Activated CD8-positive, alpha-beta memory T cell treated with anti-CD3 and anti-CD28 coated beads, Interleukin-2, amount 10 ng/mL, durations not matched to agents 7 days and 5 days (primary cell): ENCODE measurements at regions of chr12 and their contacts with region 1.

Region 1: GRCh38 chr12:85029456-85029855 is 6.6 kb downstream of the TSPAN19 start:
- DNase-seq: no peak
- ATAC-seq: no peak
- H3K4me3 Mint-ChIP-seq: no peak overlapping the region
- H3K27ac Mint-ChIP-seq: no peak overlapping the region
- H3K4me1 Mint-ChIP-seq: no peaks in the 10 kb centered on the region
- H3K27me3 Mint-ChIP-seq: no peaks in the 10 kb centered on the region

Region 2: DNA sequence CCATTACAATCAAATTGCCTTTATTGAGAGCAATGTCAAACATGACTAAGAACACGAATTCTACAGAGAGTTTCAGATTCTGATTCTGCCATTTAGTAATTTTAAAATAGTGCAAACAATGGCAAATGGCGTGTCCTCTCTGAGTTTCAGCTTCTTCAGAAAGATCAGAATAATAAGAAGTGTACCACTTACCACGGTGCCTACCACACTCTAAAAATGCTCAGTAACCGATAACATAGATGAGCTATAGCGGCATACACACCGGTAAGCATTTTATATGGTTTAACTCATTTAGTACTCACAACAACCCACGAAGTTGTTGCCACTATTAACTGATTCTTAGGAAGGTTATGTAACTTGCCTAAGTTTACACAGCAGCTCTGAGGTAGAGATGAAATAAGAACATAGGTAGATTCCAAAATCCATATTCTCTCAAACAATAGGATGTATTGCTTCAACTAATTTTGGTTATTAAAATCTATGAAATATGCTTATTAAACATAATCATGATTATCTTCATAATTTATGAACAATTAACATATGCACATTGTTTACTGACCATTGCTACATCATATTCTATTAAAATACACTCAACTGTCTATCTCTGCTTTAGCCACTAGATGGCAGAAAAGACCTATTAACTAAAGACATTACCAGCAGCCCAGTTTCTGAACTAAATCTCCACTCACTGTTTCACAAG is 155.2 kb before region 1 on chr12:
- CTCF ChIA-PET with region 1: interaction called, 20 read pairs
- DNase-seq: no peak
- ATAC-seq: peak; percentile 76
- H3K4me3 Mint-ChIP-seq: no peak overlapping the region
- H3K27ac Mint-ChIP-seq: no peak overlapping the region
- H3K4me1 Mint-ChIP-seq: no peaks in the 10 kb centered on the region
- H3K27me3 Mint-ChIP-seq: no peaks in the 10 kb centered on the region